ENCODE measurements at regions of chr17 and their contacts with region 1.

Region 1: DNA sequence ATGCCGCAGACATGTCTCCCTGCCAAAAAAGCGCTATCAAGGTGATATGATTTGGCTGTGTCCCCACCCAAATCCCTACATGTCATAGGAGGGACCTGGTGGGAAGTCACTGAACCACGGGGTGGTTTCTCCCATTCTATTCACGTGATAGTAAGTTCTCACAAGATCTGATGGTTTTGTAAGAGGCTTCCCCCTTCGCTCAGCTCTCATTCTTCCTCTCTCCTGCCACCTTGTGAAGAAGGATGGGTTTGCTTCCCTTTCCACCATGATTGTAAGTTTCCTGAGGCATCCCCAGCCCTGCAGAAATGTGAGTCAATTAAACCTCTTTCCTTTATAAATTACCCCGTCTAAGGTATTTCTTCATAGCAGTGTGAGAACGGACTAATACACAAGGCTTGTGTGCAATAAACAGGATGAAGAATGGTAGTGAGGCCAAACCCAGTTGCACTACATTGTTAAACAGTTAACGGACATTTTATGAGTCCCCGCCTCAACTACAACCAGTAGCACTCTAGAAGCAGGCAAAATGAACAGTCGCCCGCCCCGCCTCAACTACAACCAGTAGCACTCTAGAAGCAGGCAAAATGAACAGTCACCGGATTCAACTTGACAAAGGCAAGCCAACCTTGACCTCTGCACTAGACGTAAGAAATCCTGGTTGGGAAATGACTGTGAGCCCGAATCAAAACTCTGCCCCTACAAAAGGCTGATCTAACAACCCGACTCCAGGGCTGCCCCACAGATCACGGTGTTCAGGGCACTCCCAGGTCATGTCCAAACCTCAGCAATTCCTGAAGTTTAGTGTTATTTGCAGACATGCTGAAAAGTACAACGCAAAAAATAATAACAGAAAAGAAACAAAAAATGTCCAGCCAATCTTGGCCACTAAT is 26.3 kb downstream of the VPS53 start:
- DNase-seq: no peak
- H3K4me3 Mint-ChIP-seq: no peak overlapping the region
- H3K27ac Mint-ChIP-seq: no peak overlapping the region
- H3K4me1 Mint-ChIP-seq: no peaks in the 10 kb centered on the region
- H3K27me3 Mint-ChIP-seq: no peaks in the 10 kb centered on the region

Region 2: GRCh38 chr17:700504-701094 is 12.3 kb after region 1 on chr17:
- CTCF ChIA-PET with region 1: interaction called, 11 read pairs
- POLR2A ChIA-PET with region 1: interaction called, 4 read pairs
- DNase-seq: no peak
- H3K4me3 Mint-ChIP-seq: no peak overlapping the region
- H3K27ac Mint-ChIP-seq: no peak overlapping the region
- H3K4me1 Mint-ChIP-seq: no peaks in the 10 kb centered on the region
- H3K27me3 Mint-ChIP-seq: no peaks in the 10 kb centered on the region

Region 3: GRCh38 chr17:1039511-1040215 is 351.3 kb after region 1 on chr17:
- CTCF ChIA-PET with region 1: no interaction called
- POLR2A ChIA-PET with region 1: no interaction called
- DNase-seq: no peak
- H3K4me3 Mint-ChIP-seq: no peak overlapping the region
- H3K27ac Mint-ChIP-seq: no peak overlapping the region
- H3K4me1 Mint-ChIP-seq: no peaks in the 10 kb centered on the region
- H3K27me3 Mint-ChIP-seq: no peaks in the 10 kb centered on the region

Measured in activated CD4-positive, alpha-beta memory T cell treated with anti-CD3 and anti-CD28 coated beads, Interleukin-2, amount 10 ng/mL, durations not matched to agents 7 days and 5 days (primary cell).